ENCODE measurements at regions of chr15 and their contacts with region 1.

Region 1: DNA sequence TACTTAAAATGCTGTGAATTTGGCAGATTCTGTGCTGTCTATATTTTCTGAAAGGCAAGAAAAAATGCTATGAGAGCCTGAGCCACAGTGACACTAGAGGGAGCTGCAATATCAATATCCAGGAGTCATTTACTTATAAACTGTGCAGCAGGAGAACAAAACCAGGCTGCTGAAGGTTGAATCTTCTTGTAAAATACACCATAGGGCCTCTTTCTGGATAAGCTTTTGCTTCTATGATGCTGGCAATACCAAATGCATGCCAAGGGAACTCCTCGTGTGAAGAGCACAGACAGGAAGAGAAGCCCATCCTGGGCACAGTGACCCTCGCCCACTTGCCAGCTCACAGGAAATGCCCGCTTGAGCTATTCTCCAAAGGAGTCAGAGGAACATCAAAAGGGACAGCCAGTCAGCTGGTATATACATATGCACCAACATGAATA is 48.0 kb upstream of the TSPAN3 start:
- DNase-seq: no peak
- ATAC-seq: peak; percentile 68 to 79

Region 2: DNA sequence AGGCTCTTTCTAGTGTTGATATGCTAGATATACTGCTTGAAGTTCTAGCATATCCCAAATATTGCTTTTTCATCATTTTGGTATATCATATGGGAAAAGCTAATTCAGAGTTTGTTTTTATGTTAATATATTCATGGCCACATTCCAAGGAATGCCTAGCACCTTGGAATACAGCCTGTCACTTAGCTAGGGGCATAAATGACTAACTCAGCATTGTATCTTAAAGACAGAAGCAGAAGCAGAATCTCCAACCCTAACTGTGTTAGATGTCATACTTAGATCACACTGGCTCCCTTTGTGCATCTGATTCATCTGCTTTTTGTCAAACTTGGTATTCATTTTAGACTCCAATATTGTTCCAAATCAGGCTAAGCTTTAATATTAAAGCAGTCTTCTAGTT is 82.8 kb after region 1 on chr15:
- intact Hi-C with region 1: no loop called
- DNase-seq: no peak
- ATAC-seq: no peak

Region 3: DNA sequence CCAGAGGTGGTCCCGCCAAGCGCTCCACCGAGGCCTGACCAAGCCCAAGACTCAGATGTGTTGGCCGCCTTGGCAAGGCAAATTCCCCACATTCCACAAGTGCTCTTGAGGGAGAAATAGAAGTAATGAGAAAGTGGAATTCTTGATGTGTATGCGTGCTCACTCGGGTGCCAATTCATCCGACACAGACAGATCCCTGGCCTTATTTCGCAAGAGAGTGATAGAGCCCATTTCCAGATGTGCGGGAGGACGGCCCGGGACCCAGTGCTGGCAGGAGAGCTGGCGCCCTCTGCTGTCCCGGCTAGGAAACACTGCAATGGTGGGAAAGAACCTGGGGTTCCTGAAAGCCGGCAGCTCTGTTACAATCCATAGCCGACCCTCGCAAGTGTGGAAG is 377.8 kb after region 1 on chr15:
- intact Hi-C with region 1: loop called in 1 of 2 experiments (anchors 5 kb)
- DNase-seq: peak; percentile 90
- ATAC-seq: peak; percentile 86 to 89

Region 4: DNA sequence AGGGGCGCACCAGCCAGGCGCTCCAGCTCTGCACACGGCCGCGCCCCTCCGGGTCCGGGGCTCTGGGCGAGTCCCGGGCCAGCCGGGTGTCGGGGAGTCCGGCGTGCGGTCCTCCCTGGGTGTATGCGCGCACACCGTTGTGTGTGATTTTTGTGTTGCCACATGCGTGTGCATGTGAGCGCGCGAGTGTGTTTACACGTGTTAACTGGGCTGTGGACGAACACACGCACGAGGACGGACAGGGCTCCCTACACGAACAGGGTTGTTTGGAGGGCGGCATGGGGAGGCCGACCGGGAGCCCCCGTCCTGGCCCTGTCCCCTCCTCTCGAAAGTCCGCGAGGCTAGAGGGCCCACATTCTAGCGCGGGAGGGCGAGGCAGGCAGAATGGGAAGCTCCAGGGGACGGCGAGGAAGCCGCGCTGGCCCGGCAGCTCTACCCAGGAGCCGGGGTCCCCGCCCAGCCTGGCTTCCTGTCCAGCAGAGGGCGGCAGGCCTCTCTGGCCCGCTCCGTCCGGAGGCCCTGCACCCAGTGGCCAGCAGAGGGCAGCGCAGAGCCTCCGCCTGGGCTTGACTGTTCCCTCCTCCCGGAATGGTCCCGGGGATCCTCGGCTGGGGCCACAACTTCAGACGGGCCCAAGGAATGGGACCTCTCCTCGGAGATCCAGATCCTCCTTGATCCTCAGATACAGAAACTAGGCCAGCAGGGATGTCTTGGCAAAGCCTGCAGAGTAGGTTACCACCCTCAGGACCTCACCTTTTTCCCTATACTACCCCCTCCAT is 514.4 kb after region 1 on chr15:
- intact Hi-C with region 1: loop called in 1 of 2 experiments (anchors 10 kb)
- DNase-seq: peak; percentile 93
- ATAC-seq: peak; percentile 93 to 96

Measured in left cardiac atrium (tissue), 4 donors.